Activated T-helper 1 cell treated with anti-CD3 and anti-CD28 coated beads, Interleukin-12 subunit alpha, Interleukin-12 subunit beta, Interleukin-2, Interleukin-4 antibody, amounts not matched to agents 30 ng/mL and 10 ng/mL and 1 ng/mL, durations not matched to agents 14 hours and 24 hours and 36 hours (primary cell): ENCODE measurements at regions of chr7 and their contacts with region 1.

Region 1: GRCh38 chr7:5045558-5046396 is at the start of gene RBAK:
- DNase-seq: peak; percentile 87
- H3K4me3 Mint-ChIP-seq: peak within 1 kb of the TSS; percentile 89
- H3K27ac Mint-ChIP-seq: peak within 1 kb of the TSS; percentile 88
- H3K4me1 Mint-ChIP-seq: peaks cover 24% of the 10 kb centered on the region
- H3K27me3 Mint-ChIP-seq: no peaks in the 10 kb centered on the region
- total RNA-seq, gene RBAK: 12.5 and 13.0 TPM in 2 replicates

Region 2: DNA sequence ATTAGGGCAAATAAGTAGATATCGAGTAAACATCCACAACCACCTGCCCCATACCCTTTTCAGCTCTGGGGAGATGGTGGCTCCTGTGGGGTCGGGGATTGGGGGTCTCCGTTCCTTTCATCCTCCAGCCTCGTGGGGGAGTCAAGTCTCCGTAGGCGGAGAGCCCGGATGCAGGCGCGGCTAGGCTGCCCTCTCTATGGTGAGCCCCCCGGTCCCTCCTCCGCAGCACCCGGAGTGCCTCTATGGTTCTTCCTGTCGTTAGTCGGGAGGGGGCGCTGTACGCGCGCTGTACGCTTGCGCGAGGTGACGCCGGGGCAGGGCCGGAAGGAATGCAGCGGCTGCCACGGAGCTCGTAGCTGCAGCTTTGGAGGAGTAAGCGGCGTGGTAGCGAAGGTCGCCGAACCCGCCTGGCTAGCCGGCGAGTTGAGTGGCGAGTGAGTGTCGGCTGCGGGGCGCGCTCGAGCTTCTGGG is 72.0 kb before region 1 on chr7:
- intact Hi-C with region 1: loop called (anchors 1 kb)
- DNase-seq: peak; percentile 92
- H3K4me3 Mint-ChIP-seq: peak overlapping the region; percentile 94
- H3K27ac Mint-ChIP-seq: peak overlapping the region; percentile 94
- H3K4me1 Mint-ChIP-seq: peaks cover 18% of the 10 kb centered on the region
- H3K27me3 Mint-ChIP-seq: no peaks in the 10 kb centered on the region